ENCODE measurements at regions of chr12 and their contacts with region 1.

Region 1: DNA sequence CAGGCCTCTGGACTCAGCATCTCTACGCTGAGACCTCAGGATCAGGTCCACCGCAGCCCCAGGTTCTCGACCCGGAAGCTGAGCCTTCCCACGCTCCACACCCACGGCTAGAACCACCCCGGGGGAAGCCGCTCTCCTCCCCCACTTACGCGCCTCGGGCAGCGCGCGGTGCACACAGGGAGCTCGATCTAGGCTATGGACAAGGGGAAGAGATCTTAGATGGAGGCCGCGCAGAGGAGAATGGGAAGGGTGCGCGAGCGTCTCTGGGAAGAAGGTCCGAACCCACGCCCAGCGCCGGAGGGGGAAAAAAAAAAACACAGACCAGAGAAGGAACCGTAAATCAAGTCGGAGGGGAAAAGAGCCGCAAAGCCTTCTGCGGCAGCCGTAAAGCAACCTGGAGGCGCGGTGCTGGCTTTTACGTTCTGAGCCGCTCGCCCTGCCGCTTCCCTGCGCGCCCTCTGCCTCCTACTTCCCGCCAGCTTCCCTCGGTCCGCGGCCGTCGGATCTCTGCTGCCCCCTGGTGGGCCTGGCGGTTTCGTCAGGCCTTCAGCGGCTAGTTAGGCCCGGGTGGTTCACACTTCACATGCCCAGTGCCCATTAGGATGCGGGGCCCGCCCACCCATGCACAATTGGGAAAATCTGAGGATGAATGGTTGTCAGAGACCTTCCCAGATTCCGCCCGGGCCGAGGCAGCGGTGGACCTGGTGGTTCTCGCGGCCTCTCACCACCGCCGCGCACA is at the start of gene RAD52:
- DNase-seq: peak; percentile 99
- H3K4me3 ChIP-seq: peak within 1 kb of the TSS; percentile 67 to 81 (median 76)
- H3K27ac ChIP-seq: peak within 1 kb of the TSS; percentile 41
- H3K4me1 ChIP-seq: peaks cover 15% of the 10 kb centered on the region
- H3K27me3 ChIP-seq: no peaks in the 10 kb centered on the region
- CTCF ChIP-seq: peak; percentile 93 to 97
- POLR2A ChIP-seq: no peak
- total RNA-seq, gene RAD52: 10.2 and 16.1 TPM in 2 replicates

Region 2: GRCh38 chr12:569803-570434 is 379.7 kb before region 1 on chr12:
- CTCF ChIA-PET with region 1: interaction called, 52 read pairs
- POLR2A ChIA-PET with region 1: interaction called, 5 read pairs
- dilution Hi-C with region 1: no loop called
- intact Hi-C with region 1: loop called (anchors 1 kb)
- DNase-seq: peak; percentile 58
- H3K4me3 ChIP-seq: peak overlapping the region; percentile 36 to 81 (median 67)
- H3K27ac ChIP-seq: peak overlapping the region; percentile 77
- H3K4me1 ChIP-seq: peaks cover 23% of the 10 kb centered on the region
- H3K27me3 ChIP-seq: peaks cover 2 to 3% of the 10 kb centered on the region in 2 experiments
- CTCF ChIP-seq: peak; percentile 79 to 97
- POLR2A ChIP-seq: no peak

Region 3: GRCh38 chr12:810671-811415 is 138.8 kb before region 1 on chr12:
- CTCF ChIA-PET with region 1: interaction called, 12 read pairs
- POLR2A ChIA-PET with region 1: no interaction called
- dilution Hi-C with region 1: no loop called
- intact Hi-C with region 1: loop called (anchors 1 kb)
- DNase-seq: no peak
- H3K4me3 ChIP-seq: no peak overlapping the region
- H3K27ac ChIP-seq: no peak overlapping the region
- H3K4me1 ChIP-seq: peaks cover 13% of the 10 kb centered on the region
- H3K27me3 ChIP-seq: no peaks in the 10 kb centered on the region
- CTCF ChIP-seq: no peak
- POLR2A ChIP-seq: no peak

Region 4: GRCh38 chr12:931591-931990 is 18.0 kb before region 1 on chr12:
- CTCF ChIA-PET with region 1: interaction called, 14 read pairs
- POLR2A ChIA-PET with region 1: no interaction called
- dilution Hi-C with region 1: no loop called
- intact Hi-C with region 1: no loop called
- DNase-seq: no peak
- H3K4me3 ChIP-seq: no peak overlapping the region
- H3K27ac ChIP-seq: no peak overlapping the region
- H3K4me1 ChIP-seq: peaks cover 4% of the 10 kb centered on the region
- H3K27me3 ChIP-seq: no peaks in the 10 kb centered on the region
- CTCF ChIP-seq: no peak
- POLR2A ChIP-seq: no peak

Region 5: DNA sequence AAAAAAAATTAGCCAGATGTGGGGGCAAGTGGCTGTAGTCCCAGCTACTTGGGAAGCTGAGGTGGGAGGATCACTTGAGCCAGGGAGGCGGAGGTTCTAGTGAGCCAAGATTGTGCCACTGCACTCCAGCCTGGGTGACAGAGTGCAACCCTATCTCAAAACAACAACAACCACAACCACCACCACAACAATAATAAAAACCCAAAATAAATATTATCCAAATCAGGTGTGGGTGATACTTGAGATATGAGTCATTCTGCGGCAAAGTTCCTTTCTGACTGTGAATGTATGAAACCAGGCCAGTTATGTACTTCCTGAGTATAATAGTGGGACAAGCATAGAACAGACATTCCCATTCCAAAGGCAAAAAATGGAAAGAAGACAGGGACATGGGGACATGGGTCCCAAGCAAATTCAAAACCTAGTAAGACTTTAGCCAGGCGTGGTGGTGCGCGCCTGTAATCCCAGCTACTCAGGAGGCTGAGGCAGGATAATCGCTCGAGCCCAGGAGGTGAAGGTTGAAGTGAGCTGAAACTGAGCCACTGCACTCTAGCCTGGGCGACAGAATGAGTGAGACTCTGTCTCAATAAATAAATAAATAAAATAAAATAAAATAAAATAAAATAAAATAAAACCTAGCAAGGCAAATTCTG is 31.7 kb after region 1 on chr12:
- CTCF ChIA-PET with region 1: interaction called, 10 read pairs
- POLR2A ChIA-PET with region 1: no interaction called
- dilution Hi-C with region 1: no loop called
- intact Hi-C with region 1: no loop called
- DNase-seq: peak; percentile 42
- H3K4me3 ChIP-seq: no peak overlapping the region
- H3K27ac ChIP-seq: no peak overlapping the region
- H3K4me1 ChIP-seq: peaks cover 7% of the 10 kb centered on the region
- H3K27me3 ChIP-seq: no peaks in the 10 kb centered on the region
- CTCF ChIP-seq: no peak
- POLR2A ChIP-seq: no peak

Region 6: DNA sequence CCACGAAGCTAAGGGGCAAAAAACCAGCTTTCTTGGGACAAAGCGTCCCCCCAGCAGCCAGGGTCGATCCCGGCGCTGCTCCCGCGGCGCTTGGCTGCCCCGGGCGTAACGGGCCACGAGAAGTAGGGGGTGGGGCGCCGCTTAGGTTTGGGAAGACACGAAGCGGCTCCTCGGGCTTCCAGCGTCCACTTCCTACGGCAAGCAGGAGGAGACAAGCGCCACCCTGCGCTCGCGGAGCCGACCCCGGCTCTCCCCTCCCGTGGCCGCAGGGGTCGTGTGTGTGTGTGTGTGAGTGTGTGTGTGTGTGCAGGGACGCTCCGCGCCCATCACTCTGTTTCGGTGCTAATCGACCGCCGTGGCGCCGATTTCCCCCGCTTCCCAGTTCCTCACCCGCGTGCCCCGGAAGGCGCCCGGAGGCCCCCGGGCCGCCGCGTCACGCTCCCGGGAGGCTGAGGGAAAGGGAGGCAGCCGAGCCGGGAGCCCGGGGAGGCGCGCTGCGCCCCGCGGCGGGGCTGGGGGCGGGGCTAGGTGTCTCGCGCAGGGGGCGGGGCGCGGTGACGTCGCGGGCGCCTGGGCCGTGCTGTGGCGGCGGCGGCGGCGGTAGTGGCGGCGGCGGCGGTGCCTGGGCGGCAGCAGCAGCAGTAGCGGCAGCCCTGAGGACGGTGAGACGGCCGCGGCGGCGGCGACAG is 41.2 kb after region 1 on chr12 and contains the start of gene ERC1:
- CTCF ChIA-PET with region 1: interaction called, 21 read pairs
- POLR2A ChIA-PET with region 1: interaction called, 6 read pairs
- dilution Hi-C with region 1: no loop called
- intact Hi-C with region 1: loop called (anchors 1 kb)
- DNase-seq: peak; percentile 82
- H3K4me3 ChIP-seq: peak within 1 kb of the TSS; percentile 80 to 94 (median 80)
- H3K27ac ChIP-seq: peak within 1 kb of the TSS; percentile 80
- H3K4me1 ChIP-seq: peaks cover 25% of the 10 kb centered on the region
- H3K27me3 ChIP-seq: no peaks in the 10 kb centered on the region
- CTCF ChIP-seq: peak in 1 of 2 donors; percentile 9
- POLR2A ChIP-seq: peak; percentile 60
- total RNA-seq, gene ERC1: 60.0 and 66.1 TPM in 2 replicates

Region 7: GRCh38 chr12:1083889-1084262 is 134.3 kb after region 1 on chr12:
- CTCF ChIA-PET with region 1: interaction called, 11 read pairs
- POLR2A ChIA-PET with region 1: no interaction called
- dilution Hi-C with region 1: no loop called
- intact Hi-C with region 1: no loop called
- DNase-seq: no peak
- H3K4me3 ChIP-seq: no peak overlapping the region
- H3K27ac ChIP-seq: no peak overlapping the region
- H3K4me1 ChIP-seq: no peaks in the 10 kb centered on the region
- H3K27me3 ChIP-seq: no peaks in the 10 kb centered on the region
- CTCF ChIP-seq: no peak
- POLR2A ChIP-seq: no peak